ENCODE measurements at regions of chr5 and their contacts with region 1.

Region 1: GRCh38 chr5:170278611-170279452 is 18.7 kb downstream of the LCP2 start:
- DNase-seq: peak; percentile 98
- ATAC-seq: peak; percentile 76
- H3K4me3 Mint-ChIP-seq: peak overlapping the region; percentile 65
- H3K27ac Mint-ChIP-seq: peak overlapping the region; percentile 88
- H3K4me1 Mint-ChIP-seq: peaks cover 92% of the 10 kb centered on the region
- H3K27me3 Mint-ChIP-seq: no peaks in the 10 kb centered on the region

Region 2: GRCh38 chr5:170262061-170263045 is 16.5 kb before region 1 on chr5:
- CTCF ChIA-PET with region 1: interaction called, 49 read pairs
- DNase-seq: peak; percentile 84
- ATAC-seq: peak; percentile 56
- H3K4me3 Mint-ChIP-seq: peak overlapping the region; percentile 38
- H3K27ac Mint-ChIP-seq: peak overlapping the region; percentile 89
- H3K4me1 Mint-ChIP-seq: peaks cover 93% of the 10 kb centered on the region
- H3K27me3 Mint-ChIP-seq: no peaks in the 10 kb centered on the region

Region 3: DNA sequence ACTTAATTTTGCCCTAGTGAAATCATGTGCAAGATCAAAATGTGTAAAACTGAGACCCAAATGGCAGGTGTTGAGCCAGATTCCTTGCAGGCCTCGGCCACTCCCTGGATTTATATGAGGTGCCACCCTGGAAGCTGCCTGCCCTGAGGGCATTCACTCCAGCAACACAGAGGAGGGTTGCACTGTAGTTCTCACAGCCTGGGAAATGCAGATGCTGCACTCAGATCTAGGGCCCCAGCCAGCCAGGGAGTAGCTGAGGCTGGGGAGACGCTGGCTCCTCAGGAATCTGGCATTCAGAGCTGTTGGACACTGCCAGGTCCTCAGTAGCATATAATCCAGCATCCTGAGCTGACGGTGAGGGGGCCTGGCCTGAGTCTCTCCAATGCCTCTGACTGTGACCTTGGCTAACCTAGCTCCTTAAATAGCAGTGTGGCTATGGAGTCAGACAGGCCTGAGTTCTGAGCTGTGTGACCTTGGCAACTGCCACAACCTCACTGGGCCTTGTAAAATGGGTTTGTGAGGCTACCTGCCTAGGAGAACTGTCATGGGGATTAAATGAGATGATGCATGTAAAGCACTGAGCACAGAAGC is 101.6 kb after region 1 on chr5:
- CTCF ChIA-PET with region 1: no interaction called
- DNase-seq: no peak
- ATAC-seq: no peak
- H3K4me3 Mint-ChIP-seq: no peak overlapping the region
- H3K27ac Mint-ChIP-seq: no peak overlapping the region
- H3K4me1 Mint-ChIP-seq: no peaks in the 10 kb centered on the region
- H3K27me3 Mint-ChIP-seq: peaks cover 13% of the 10 kb centered on the region

Region 4: DNA sequence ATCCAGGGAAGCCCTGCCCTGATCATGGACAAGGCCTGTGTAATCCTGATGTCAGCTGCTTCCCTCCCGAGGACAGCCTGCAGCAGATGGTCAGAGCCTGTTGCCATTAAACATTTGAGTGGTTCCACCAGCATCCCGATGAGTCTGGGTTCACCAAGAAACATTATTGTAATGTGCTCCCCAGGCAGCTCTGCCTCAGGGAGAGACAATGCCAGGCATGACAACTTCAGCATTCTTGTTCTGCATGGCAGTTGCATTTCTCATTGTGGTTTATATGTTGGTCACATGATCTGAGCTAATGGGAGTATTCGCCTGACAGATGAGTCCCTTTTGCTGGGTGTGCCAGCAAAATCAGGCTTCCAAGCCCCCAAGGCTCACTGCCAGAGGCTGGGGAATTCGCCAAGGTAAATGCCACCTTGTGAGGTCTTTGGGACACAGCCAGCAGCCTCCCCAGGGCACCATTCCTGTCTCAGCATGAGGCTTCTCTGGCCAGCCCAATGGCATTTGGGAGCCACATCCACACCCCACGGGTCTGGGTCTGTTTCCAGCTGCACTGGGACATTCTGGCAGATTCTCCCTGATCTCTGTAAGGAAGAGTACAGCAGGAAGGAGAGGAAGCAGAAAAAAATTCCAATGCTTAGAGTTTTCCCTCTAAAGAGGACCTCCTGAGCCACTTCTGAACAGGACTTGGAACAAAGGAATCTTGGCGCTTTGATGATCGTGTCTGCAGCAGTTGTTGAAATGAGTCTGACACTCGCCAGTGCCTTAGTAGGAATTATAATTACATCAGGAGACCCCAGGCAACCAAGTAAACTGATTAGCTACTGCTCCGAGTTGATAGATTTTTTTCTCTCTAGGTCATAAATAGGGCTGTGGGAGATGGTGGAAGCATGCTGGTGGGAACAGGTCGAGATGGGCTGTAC is 243.6 kb after region 1 on chr5:
- CTCF ChIA-PET with region 1: no interaction called
- DNase-seq: no peak
- ATAC-seq: no peak
- H3K4me3 Mint-ChIP-seq: no peak overlapping the region
- H3K27ac Mint-ChIP-seq: no peak overlapping the region
- H3K4me1 Mint-ChIP-seq: no peaks in the 10 kb centered on the region
- H3K27me3 Mint-ChIP-seq: peaks cover 4% of the 10 kb centered on the region

Measured in activated CD8-positive, alpha-beta memory T cell treated with anti-CD3 and anti-CD28 coated beads, Interleukin-2, amount 10 ng/mL, durations not matched to agents 7 days and 5 days (primary cell).